Activated CD4-positive, alpha-beta T cell treated with anti-CD3 and anti-CD28 coated beads for 36 hours (primary cell): ENCODE measurements at regions of chr5 and their contacts with region 1.

Region 1: DNA sequence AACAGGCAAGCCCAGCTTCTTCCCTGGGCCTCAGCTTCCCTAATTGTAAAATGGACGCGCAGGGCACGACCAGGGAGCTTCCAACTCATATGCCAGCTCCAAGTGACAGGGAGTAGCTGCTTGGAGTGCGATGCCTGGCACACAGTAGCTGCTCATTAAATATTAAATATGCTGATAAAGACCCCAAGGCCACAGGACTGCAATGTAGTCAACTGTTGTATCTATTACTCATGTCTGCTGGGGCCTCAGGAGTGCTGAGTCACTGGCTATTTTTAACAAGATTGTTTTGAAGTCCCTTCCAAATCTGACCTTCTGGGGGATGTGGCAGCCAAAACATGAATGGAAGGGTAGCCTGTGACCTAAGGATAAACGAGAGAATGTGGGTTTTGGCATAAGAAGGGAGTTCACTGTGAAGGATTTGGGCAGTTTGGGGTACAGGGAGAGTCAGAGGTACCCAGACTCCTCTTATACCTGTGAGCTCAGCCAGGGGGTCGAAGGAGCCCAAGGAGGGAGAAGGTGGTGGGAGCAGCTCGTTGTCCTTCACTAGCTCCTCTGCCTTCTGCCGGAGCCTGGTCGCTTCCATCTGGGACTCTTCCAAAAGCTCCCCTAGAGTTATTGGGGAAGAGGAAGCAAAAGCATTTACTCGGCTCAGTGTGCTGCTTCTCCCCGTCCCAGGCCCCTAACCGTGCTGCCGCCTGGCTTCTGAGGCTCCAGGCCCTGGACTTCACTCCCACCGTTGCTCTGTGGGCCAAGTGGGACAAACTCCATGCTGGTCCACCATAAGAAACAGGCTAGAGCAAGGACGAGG is 17.5 kb downstream of the TNIP1 start:
- DNase-seq: no peak
- ATAC-seq: no peak
- H3K4me3 Mint-ChIP-seq: no peak overlapping the region
- H3K27ac Mint-ChIP-seq: peak overlapping the region; percentile 87
- H3K4me1 Mint-ChIP-seq: peaks cover 96% of the 10 kb centered on the region
- H3K27me3 Mint-ChIP-seq: no peaks in the 10 kb centered on the region

Region 2: GRCh38 chr5:151093476-151093889 is 30.1 kb after region 1 on chr5:
- CTCF ChIA-PET with region 1: no interaction called
- POLR2A ChIA-PET with region 1: no interaction called
- intact Hi-C with region 1: loop called in 1 of 2 experiments (anchors 5 kb)
- DNase-seq: no peak
- ATAC-seq: peak; percentile 5
- H3K4me3 Mint-ChIP-seq: peak overlapping the region; percentile 54
- H3K27ac Mint-ChIP-seq: peak overlapping the region; percentile 93
- H3K4me1 Mint-ChIP-seq: peaks cover 63% of the 10 kb centered on the region
- H3K27me3 Mint-ChIP-seq: no peaks in the 10 kb centered on the region